Endothelial cell of umbilical vein (primary cell): ENCODE measurements at regions of chr10 and their contacts with region 1.

Region 1: GRCh38 chr10:74826142-74827044 is at the start of gene KAT6B:
- DNase-seq: peak; percentile 100
- H3K4me3 ChIP-seq: peak within 1 kb of the TSS; percentile 28 to 96 (median 35)
- H3K27ac ChIP-seq: peak within 1 kb of the TSS; percentile 57
- H3K4me1 ChIP-seq: no peaks in the 10 kb centered on the region
- H3K27me3 ChIP-seq: no peaks in the 10 kb centered on the region
- CTCF ChIP-seq: peak; percentile 9 to 22
- POLR2A ChIP-seq: peak; percentile 57
- total RNA-seq, gene KAT6B: 15.0 and 17.0 TPM in 2 replicates

Region 2: DNA sequence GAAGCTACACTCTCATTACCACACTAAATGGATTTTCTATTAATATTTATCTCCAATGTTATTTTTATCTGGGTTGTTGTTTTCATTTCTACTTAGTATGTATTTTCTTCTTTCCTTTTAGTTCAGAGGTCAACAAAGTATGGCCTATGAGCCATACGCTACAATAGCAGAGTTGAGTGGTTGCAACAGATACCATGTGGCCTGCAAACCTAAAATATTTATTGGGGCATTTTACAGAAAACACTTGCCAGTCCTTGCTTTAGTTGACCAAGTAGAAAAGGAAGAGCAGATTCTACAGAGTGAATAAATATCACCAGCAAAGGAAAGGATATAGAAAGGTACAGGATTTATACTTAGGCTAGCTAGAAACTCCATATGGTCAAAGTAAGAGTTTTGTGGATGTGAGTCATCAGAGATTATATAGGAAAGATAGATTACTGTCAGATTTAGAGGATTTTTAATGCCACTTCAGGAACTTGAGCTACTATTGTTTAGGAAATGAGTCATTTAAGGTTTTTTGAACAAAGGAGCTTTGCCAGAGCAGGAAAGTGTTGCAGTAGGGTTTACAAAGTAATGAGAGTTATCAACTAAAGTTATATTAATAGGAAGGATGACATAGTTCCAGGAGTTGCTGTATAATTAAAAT is 323.3 kb before region 1 on chr10:
- CTCF ChIA-PET with region 1: no interaction called
- POLR2A ChIA-PET with region 1: no interaction called
- dilution Hi-C with region 1: no loop called
- intact Hi-C with region 1: loop called (anchors 1 kb)
- DNase-seq: peak; percentile 90
- H3K4me3 ChIP-seq: peak overlapping the region in 1 of 3 experiments; percentile 49
- H3K27ac ChIP-seq: peak overlapping the region; percentile 81
- H3K4me1 ChIP-seq: peaks cover 42% of the 10 kb centered on the region
- H3K27me3 ChIP-seq: no peaks in the 10 kb centered on the region
- CTCF ChIP-seq: no peak
- POLR2A ChIP-seq: no peak

Region 3: GRCh38 chr10:74542065-74542464 is 284.3 kb before region 1 on chr10:
- CTCF ChIA-PET with region 1: no interaction called
- POLR2A ChIA-PET with region 1: no interaction called
- dilution Hi-C with region 1: no loop called
- intact Hi-C with region 1: no loop called
- DNase-seq: peak; percentile 20
- H3K4me3 ChIP-seq: no peak overlapping the region
- H3K27ac ChIP-seq: no peak overlapping the region
- H3K4me1 ChIP-seq: peaks cover 3% of the 10 kb centered on the region
- H3K27me3 ChIP-seq: no peaks in the 10 kb centered on the region
- CTCF ChIP-seq: no peak
- POLR2A ChIP-seq: no peak

Region 4: DNA sequence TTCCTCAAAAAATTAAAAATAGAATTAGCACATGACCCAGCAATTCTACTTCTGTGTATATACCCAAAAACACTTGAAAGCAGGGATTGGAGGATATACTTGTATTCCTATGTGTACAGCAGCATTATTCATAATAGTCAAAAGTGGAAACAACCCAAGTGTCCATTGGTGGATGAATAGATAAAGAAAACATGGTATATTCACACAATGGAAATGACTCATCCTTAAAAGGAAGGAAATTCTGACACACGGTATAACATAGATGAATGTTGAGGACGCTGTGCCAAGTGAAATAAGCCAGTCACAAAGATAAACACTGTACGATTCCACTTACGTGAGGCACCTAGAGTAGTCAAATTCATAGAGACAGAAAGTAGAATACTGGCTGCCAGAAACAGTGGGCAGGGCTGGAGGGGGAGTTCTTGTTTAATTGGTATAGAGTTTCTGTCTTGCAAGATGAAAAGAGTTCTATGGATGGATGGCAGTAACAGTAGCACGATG is 26.6 kb before region 1 on chr10:
- CTCF ChIA-PET with region 1: no interaction called
- POLR2A ChIA-PET with region 1: no interaction called
- dilution Hi-C with region 1: no loop called
- intact Hi-C with region 1: loop called (anchors 1 kb)
- DNase-seq: peak; percentile 98
- H3K4me3 ChIP-seq: no peak overlapping the region
- H3K27ac ChIP-seq: peak overlapping the region; percentile 56
- H3K4me1 ChIP-seq: peaks cover 8% of the 10 kb centered on the region
- H3K27me3 ChIP-seq: no peaks in the 10 kb centered on the region
- CTCF ChIP-seq: no peak
- POLR2A ChIP-seq: peak; percentile 38

Region 5: DNA sequence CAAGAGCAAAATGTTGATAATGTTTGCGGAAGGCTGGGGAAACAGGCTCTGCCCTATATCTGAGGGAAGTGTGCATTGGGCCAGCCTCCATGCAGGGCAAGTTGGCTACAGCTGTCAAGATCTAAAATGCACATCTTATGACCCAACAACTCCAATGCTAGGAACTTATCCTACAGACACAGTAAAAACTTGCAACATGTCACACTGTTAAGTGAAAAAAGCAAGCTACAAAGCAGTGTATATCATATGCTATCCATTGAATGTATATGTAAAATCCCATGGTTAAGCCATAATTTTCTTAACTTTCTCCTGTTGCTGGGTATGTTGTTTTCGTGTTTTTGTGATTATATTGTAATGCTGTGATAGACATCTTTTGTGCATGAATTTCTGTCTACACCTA is 16.3 kb before region 1 on chr10:
- CTCF ChIA-PET with region 1: no interaction called
- POLR2A ChIA-PET with region 1: no interaction called
- dilution Hi-C with region 1: no loop called
- intact Hi-C with region 1: no loop called
- DNase-seq: no peak
- H3K4me3 ChIP-seq: no peak overlapping the region
- H3K27ac ChIP-seq: no peak overlapping the region
- H3K4me1 ChIP-seq: no peaks in the 10 kb centered on the region
- H3K27me3 ChIP-seq: no peaks in the 10 kb centered on the region
- CTCF ChIP-seq: no peak
- POLR2A ChIP-seq: no peak

Region 6: GRCh38 chr10:74851831-74852230 is 25.4 kb after region 1 on chr10:
- CTCF ChIA-PET with region 1: no interaction called
- POLR2A ChIA-PET with region 1: no interaction called
- dilution Hi-C with region 1: no loop called
- intact Hi-C with region 1: no loop called
- DNase-seq: peak; percentile 50
- H3K4me3 ChIP-seq: no peak overlapping the region
- H3K27ac ChIP-seq: no peak overlapping the region
- H3K4me1 ChIP-seq: no peaks in the 10 kb centered on the region
- H3K27me3 ChIP-seq: no peaks in the 10 kb centered on the region
- CTCF ChIP-seq: no peak
- POLR2A ChIP-seq: no peak

Region 7: GRCh38 chr10:75111367-75111906 is 285.0 kb after region 1 on chr10 and contains the start of gene SAMD8:
- CTCF ChIA-PET with region 1: no interaction called
- POLR2A ChIA-PET with region 1: no interaction called
- dilution Hi-C with region 1: no loop called
- intact Hi-C with region 1: loop called (anchors 5 kb)
- DNase-seq: peak; percentile 97
- H3K4me3 ChIP-seq: peak within 1 kb of the TSS; percentile 88 to 98 (median 93)
- H3K27ac ChIP-seq: peak within 1 kb of the TSS; percentile 94
- H3K4me1 ChIP-seq: peaks cover 15% of the 10 kb centered on the region
- H3K27me3 ChIP-seq: no peaks in the 10 kb centered on the region
- CTCF ChIP-seq: peak in 1 of 2 donors; percentile 29
- POLR2A ChIP-seq: no peak
- total RNA-seq, gene SAMD8: 22.8 and 23.2 TPM in 2 replicates